Stomach (tissue), 19 donors: ENCODE measurements at regions of chr6 and their contacts with region 1.

Region 1: GRCh38 chr6:124714728-124715127 is 247.5 kb upstream of the RNF217 start:
- DNase-seq: no peak
- H3K4me3 ChIP-seq: no peak overlapping the region
- H3K27ac ChIP-seq: no peak overlapping the region
- H3K4me1 ChIP-seq: no peaks in the 10 kb centered on the region
- H3K27me3 ChIP-seq: no peaks in the 10 kb centered on the region
- CTCF ChIP-seq: no peak
- EP300 ChIP-seq: no peak
- POLR2A ChIP-seq: no peak

Region 2: GRCh38 chr6:124334359-124334758 is 380.4 kb before region 1 on chr6:
- intact Hi-C with region 1: loop called (anchors 5 kb)
- DNase-seq: no peak
- H3K4me3 ChIP-seq: no peak overlapping the region
- H3K27ac ChIP-seq: no peak overlapping the region
- H3K4me1 ChIP-seq: no peaks in the 10 kb centered on the region
- H3K27me3 ChIP-seq: no peaks in the 10 kb centered on the region
- CTCF ChIP-seq: no peak
- EP300 ChIP-seq: no peak
- POLR2A ChIP-seq: no peak

Region 3: GRCh38 chr6:124339610-124340339 is 375.0 kb before region 1 on chr6:
- intact Hi-C with region 1: loop called (anchors 5 kb)
- DNase-seq: no peak
- H3K4me3 ChIP-seq: no peak overlapping the region
- H3K27ac ChIP-seq: no peak overlapping the region
- H3K4me1 ChIP-seq: no peaks in the 10 kb centered on the region
- H3K27me3 ChIP-seq: no peaks in the 10 kb centered on the region
- CTCF ChIP-seq: no peak
- EP300 ChIP-seq: no peak
- POLR2A ChIP-seq: no peak

Region 4: GRCh38 chr6:124479991-124480430 is 234.7 kb before region 1 on chr6:
- intact Hi-C with region 1: no loop called
- DNase-seq: peak in 1 of 2 donors; percentile 1
- H3K4me3 ChIP-seq: no peak overlapping the region
- H3K27ac ChIP-seq: no peak overlapping the region
- H3K4me1 ChIP-seq: no peaks in the 10 kb centered on the region
- H3K27me3 ChIP-seq: no peaks in the 10 kb centered on the region
- CTCF ChIP-seq: no peak
- EP300 ChIP-seq: no peak
- POLR2A ChIP-seq: no peak